ENCODE measurements at regions of chr7 and their contacts with region 1.

Region 1: DNA sequence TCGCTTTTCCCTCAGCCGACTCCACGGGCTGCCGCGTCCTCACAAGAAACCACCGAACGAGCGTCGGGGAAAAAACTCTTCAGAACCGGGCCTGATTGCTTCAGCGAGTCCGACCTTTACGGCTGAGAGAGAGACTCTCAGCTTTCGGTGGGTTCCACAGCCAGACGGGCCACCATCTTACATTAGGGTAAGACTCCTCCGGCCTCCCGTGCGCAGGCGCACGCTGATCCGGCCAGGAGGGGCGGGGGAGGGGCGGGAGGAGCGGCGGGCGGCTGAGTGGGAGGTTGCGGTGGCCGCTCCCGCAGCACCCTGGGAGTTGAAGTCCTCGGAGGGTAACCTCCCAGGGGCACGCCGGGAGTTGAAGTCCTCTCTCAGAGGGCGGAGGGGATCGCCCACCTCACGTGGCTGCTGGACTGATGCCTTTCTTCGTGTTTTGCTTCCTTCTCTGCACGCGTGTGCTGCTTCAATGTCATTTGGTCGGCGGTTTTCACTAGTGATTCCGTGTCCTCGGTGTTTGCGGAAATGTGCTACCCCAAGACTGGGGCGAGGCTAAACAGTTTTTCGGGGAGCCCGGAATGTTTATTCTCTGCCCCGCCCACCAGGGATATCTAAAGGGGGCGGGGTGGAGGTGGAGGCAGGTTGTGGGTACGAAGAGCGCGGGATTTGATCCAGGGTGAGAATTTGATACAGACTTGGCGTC is at the start of gene CNOT4:
- DNase-seq: peak; percentile 97 to 99 (median 98)
- ATAC-seq: peak; percentile 99
- H3K4me3 ChIP-seq: peak within 1 kb of the TSS; percentile 98
- H3K27ac ChIP-seq: peak within 1 kb of the TSS; percentile 98
- H3K4me1 ChIP-seq: peaks cover 2% of the 10 kb centered on the region
- H3K27me3 ChIP-seq: no peaks in the 10 kb centered on the region
- total RNA-seq, gene CNOT4: 25.3 to 33.1 (median 29.3) TPM

Region 2: DNA sequence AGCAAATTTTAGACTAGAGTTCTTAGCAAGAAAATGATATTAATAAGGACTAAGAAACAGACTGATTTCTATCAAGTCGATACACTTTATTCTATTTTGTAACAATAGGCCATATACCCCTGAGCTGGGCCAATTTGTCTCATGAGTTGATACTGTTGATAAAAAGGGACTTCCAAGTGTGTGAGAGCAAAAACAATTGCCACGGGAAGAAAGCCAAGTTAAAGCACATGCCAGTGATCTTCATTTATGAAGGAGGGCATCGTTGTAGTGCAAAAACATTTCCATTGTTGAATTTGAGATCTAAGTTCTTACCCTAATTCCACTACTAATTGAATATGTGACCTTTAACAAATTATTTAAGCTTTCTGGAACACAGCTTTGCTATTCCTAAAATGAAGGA is 120.1 kb before region 1 on chr7:
- intact Hi-C with region 1: loop called in 1 of 4 experiments (anchors 10 kb)
- DNase-seq: no peak
- ATAC-seq: no peak
- H3K4me3 ChIP-seq: no peak overlapping the region
- H3K27ac ChIP-seq: no peak overlapping the region
- H3K4me1 ChIP-seq: no peaks in the 10 kb centered on the region
- H3K27me3 ChIP-seq: no peaks in the 10 kb centered on the region

Region 3: DNA sequence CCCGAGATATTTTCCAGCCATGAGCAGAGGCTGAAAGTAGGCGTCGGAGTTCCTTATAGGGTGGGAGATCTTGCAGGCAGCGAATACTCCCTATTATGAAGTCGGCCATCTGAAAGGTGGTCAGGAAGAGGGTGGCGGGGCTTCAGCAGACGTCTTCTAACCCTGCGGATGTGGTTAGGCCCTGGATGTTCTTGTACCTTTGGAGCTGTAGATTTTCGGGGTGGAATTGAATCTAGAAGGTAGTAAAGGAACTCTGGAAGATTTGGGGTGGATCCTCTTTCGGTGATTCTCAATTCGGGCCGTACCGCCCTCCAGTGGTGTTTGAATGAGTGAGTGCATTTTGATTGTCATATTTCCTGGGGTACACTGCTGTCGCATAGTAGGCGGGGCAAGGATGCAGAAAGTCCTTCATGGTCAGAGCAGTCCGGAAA is 48.3 kb after region 1 on chr7:
- intact Hi-C with region 1: loop called in 1 of 4 experiments (anchors 2 kb)
- DNase-seq: peak in 2 of 3 donors; percentile 55 to 72
- ATAC-seq: peak; percentile 73 to 78
- H3K4me3 ChIP-seq: peak overlapping the region; percentile 80
- H3K27ac ChIP-seq: peak overlapping the region; percentile 100
- H3K4me1 ChIP-seq: peaks cover 2% of the 10 kb centered on the region
- H3K27me3 ChIP-seq: no peaks in the 10 kb centered on the region

Measured in right cardiac atrium (tissue), 5 donors.